ENCODE measurements at regions of chr17 and their contacts with region 1.

Region 1: GRCh38 chr17:78176548-78177025 is 8.2 kb downstream of the SYNGR2 start:
- DNase-seq: peak; percentile 78
- CTCF ChIP-seq: peak; percentile 98

Region 2: DNA sequence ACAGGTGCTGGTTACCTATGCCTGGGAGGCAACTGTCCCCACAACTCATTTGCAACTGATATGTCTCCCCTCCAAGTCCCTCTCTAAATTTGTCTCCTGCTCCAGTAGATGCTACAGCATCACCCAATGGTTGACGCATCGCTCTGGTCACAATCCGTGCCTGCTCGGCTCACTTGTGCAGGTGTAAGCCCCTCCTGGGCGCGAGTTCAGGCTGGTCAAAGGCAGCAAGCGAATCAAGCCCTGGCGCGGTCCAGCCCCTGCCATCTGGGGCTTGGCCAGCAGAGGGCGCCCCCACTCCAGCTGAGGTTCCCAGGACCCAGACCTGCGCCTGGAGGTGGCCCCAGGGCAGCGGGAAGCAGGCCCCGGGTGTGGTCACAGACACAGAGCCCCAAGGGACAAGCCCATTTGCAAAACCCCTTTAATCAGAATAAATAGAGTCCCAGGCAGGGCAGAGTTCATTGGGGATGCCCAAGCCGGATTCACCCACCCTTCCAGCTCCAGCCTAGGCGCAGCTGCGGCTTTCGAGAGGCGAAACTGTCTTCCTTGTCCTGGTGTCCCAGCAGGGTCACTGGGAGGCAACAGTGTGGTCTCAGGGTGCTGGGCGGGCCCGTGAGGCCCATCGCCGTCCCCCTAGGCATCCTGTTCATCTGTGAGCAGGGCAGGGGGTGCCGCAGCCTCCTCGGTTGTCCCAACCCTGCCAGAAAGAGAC is 63.9 kb before region 1 on chr17:
- CTCF ChIA-PET with region 1: interaction called, 24 read pairs
- POLR2A ChIA-PET with region 1: interaction called, 3 read pairs
- DNase-seq: peak; percentile 89
- CTCF ChIP-seq: peak; percentile 97

Region 3: GRCh38 chr17:78140169-78140976 is 36.2 kb before region 1 on chr17:
- CTCF ChIA-PET with region 1: interaction called, 48 read pairs
- POLR2A ChIA-PET with region 1: interaction called, 4 read pairs
- DNase-seq: peak; percentile 97
- CTCF ChIP-seq: no peak

Region 4: GRCh38 chr17:78159575-78160158 is 16.9 kb before region 1 on chr17:
- CTCF ChIA-PET with region 1: interaction called, 30 read pairs
- POLR2A ChIA-PET with region 1: interaction called, 3 read pairs
- DNase-seq: no peak
- CTCF ChIP-seq: no peak

Region 5: DNA sequence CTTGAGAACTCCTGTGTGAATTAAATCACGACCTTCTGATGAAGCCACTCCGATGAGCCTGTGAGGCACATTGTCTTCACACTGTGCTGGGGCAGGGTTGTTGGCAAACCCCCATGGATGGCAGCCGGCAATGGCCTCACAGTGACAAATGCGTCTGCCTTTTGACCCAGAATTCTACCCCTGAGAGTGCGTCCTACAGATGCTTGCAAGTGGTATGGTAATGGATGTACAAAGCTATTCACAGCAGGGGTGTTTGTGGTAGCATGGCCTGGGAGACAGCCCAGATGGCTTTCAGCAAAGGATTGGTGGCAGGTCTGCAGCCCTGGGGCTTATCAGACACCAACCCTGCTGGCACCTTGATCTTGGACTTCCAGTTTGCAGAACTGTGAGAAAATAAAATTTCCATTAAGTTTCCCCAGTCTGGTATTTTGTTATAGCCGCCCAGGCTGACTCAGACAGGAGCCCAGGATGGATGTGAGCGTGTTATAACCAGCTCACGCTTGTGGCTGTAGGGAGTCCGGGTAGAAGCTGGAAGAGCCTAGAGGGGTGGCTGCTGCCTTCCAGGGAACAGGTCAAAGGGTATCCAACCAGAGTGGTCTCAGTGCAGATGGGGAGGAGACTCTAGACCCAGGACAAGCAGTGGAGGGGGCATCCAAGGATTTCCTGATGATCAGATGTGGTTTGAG is 20.7 kb after region 1 on chr17:
- CTCF ChIA-PET with region 1: interaction called, 14 read pairs
- POLR2A ChIA-PET with region 1: interaction called, 3 read pairs
- DNase-seq: no peak
- CTCF ChIP-seq: no peak